Colonic mucosa (tissue), 4 donors: ENCODE measurements at regions of chr2 and their contacts with region 1.

Region 1: DNA sequence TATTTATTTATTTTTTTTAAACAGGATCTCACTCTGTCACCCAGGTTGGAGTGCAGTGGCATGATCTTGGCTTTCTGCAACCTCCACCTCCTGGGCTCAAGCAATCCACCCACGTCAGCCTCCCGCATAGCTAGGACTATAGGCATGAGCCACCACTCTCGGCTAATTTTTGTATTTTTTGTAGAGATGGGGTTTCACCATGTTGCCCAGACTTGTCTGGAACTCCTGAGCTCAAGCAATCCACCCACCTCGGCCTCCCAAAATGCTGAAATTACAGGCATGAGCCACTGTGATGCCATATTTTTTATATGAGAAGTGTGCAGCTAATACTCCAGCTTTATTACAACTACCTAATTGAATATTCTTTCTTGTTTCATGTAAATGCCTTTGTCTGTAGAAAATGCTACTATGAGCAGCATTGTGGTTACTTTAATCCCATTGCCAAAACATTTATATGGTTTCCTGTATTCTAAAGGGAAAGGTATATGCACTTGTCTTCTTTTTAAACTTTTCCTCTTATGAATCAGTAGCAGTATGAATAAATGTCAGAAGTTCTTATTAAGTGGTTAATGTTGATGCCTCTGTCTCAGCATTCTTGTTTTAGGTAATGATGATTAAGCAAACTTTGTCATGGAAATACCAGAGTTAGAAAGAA is 9.5 kb upstream of the BCL2L11 start:
- DNase-seq: no peak
- H3K4me3 ChIP-seq: no peak overlapping the region
- H3K27ac ChIP-seq: no peak overlapping the region
- H3K4me1 ChIP-seq: no peaks in the 10 kb centered on the region
- H3K27me3 ChIP-seq: no peaks in the 10 kb centered on the region
- CTCF ChIP-seq: no peak

Region 2: DNA sequence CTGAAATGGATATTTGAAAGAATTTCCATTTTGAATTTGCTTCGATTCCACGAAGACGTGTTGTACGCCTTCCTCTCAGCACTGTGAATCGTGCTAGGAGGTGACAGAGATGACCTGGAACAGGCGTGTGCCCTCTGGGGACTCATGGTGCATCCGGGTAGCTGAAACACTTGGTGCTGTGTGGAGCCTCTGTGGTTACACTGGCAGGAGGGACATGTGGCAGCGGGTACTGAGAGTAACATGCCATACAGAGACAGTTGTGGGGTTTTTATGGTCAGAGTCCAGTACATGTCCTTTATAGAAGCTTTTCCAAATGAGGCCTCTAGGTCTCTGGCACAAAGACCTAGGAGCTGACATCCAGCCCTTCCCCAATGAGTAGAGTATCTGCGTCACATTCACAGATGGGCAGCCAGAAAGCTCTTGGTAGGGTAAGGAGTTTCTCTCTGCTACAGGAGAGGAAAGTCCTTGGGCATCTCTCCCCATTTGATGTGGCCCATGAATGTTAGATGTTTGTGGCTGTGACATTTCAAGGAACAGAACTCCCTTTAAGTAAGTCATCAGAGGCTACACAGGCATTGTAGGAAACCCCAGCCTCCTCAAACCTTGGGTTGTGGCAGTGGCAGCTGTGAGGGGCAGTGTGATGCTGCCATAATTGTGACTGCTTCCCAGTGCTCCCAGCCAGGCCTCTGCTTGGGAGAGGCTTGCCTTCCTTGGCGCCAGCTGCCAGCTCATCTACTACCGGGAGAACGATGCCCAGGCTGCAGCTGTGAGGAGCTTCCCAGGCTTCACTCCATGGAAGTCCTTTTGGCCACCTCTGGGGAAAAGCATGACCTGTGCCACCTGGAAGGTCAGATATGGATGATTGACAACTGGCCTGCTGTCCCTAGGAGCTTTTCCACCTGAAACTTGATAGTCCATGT is 298.2 kb before region 1 on chr2:
- intact Hi-C with region 1: loop called (anchors 5 kb)
- DNase-seq: no peak
- H3K4me3 ChIP-seq: no peak overlapping the region
- H3K27ac ChIP-seq: no peak overlapping the region
- H3K4me1 ChIP-seq: no peaks in the 10 kb centered on the region
- H3K27me3 ChIP-seq: no peaks in the 10 kb centered on the region
- CTCF ChIP-seq: no peak

Region 3: DNA sequence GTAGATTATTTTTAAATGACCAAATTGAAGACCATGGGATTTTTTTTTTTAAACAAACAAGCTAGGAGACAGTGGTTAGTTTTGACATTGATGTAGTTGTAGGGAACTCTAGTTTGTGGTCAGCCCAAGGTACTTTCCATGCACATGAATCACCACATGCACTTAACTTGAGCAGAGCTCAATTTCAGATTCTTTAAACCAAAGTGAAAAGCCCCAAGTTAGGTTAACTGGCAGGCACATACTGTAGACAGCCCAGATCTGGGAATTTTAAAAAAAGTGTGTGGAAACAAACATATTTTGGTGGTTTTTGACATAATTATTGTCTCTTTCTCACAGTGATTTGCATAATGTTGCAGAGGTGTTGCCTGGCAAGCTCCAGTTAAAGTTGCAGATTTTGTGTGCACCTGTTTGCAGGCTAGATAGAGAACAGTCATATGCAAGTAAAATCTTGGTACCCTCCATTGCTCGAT is 97.9 kb after region 1 on chr2:
- intact Hi-C with region 1: no loop called
- DNase-seq: no peak
- H3K4me3 ChIP-seq: no peak overlapping the region
- H3K27ac ChIP-seq: no peak overlapping the region
- H3K4me1 ChIP-seq: no peaks in the 10 kb centered on the region
- H3K27me3 ChIP-seq: no peaks in the 10 kb centered on the region
- CTCF ChIP-seq: no peak